ENCODE measurements at regions of chr10 and their contacts with region 1.

Region 1: DNA sequence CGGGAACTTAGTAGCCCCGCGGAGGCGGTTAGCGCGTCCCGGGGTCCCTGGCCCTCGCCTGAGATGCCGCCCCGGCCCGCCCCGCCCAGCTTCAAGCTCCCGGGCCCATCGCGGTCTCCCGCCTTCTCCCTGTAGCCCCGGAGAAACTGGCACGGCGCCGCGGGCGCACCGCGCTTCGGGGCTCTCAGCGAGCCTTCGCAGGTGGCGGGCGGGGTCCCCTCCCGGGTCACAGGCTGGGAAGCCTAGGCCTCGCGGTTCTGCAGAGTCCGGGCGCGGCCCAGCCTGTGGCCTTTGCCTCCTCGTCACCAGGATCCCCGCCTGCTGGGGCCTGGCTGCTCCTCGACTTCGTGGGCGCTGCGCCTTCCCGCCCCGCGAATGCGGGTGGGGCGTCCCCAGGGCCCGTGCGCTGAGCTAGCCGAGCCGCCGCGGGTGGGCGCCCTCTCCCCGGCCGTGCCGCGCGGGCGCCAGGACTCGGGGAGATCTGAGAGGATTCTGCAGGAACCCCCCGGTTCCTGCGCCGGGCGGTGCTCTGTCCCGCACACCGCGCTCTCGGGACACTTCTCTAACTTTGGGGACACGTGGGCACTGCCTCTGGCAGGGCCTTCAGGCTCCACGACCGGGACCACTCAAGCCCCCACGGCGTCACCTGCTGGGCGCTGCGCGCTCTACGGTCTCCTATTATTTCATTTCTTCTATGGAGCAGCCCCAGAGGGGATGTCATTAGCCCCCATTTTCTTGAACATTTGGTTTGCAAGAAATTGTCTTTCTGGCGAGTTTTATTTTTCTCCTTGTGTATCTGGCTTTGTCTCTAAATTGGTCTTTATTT is 682 bp upstream of the RGS10 start:
- DNase-seq: peak; percentile 49
- ATAC-seq: peak; percentile 58
- H3K4me3 ChIP-seq: peak overlapping the region; percentile 81
- H3K27ac ChIP-seq: peak overlapping the region; percentile 43
- H3K4me1 ChIP-seq: peaks cover 20% of the 10 kb centered on the region
- H3K27me3 ChIP-seq: no peaks in the 10 kb centered on the region; the same call in 1 of the 2 replicates
- CTCF ChIP-seq: peak; percentile 56
- POLR2A ChIP-seq: no peak; the same call in 1 of the 2 replicates
- RAD21 ChIP-seq: peak; percentile 54

Region 2: DNA sequence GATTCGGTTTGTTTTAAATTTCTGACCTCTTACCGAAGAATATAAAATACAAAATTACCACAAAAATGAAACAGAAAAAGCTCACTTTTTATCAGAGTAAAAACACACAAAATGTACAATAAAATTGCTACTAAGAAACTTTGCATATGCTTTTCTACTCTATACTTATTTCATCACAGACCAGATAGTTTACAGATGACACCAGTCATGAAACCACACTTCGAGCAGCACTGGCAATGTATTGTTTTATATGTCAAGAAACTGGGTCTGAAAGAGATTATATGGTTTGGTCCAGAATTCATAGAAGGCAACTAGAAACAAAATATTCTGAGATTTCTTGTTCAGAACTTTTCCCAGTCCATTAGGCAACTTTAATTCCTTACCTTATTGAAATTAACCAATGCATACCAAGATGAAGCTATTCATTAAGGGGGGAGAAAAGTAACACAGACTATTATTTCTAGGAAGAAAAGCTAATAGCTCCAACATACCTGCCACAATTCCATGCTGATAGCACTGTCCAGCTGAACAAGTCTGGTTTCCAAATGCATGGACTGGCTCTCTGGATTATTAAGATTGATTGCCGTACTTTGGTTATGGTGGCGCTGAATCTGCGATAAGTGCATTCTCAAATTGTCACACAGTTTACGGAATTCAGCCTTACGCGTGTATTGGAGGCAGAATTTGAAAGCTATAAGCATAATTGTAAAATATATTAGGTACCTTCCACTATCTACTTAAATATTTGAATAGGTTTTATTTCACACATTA is 472.6 kb before region 1 on chr10:
- CTCF ChIA-PET with region 1: no interaction called
- POLR2A ChIA-PET with region 1: interaction called, 12 read pairs
- dilution Hi-C with region 1: no loop called
- in situ Hi-C with region 1: no loop called
- intact Hi-C with region 1: no loop called
- DNase-seq: no peak
- ATAC-seq: no peak
- H3K4me3 ChIP-seq: no peak overlapping the region
- H3K27ac ChIP-seq: no peak overlapping the region
- H3K4me1 ChIP-seq: peaks cover 2% of the 10 kb centered on the region; the same call in 1 of the 2 replicates
- H3K27me3 ChIP-seq: no peaks in the 10 kb centered on the region
- CTCF ChIP-seq: no peak
- POLR2A ChIP-seq: no peak
- RAD21 ChIP-seq: no peak

Region 3: GRCh38 chr10:119355930-119356329 is 187.3 kb before region 1 on chr10:
- CTCF ChIA-PET with region 1: no interaction called
- POLR2A ChIA-PET with region 1: no interaction called
- dilution Hi-C with region 1: no loop called
- in situ Hi-C with region 1: no loop called
- intact Hi-C with region 1: no loop called
- DNase-seq: no peak
- ATAC-seq: no peak
- H3K4me3 ChIP-seq: no peak overlapping the region
- H3K27ac ChIP-seq: no peak overlapping the region
- H3K4me1 ChIP-seq: peaks cover 3% of the 10 kb centered on the region; the same call in 1 of the 2 replicates
- H3K27me3 ChIP-seq: no peaks in the 10 kb centered on the region
- CTCF ChIP-seq: peak; percentile 29; the same call in 1 of the 2 replicates
- POLR2A ChIP-seq: no peak
- RAD21 ChIP-seq: peak; percentile 16; the same call in 1 of the 2 replicates

Region 4: DNA sequence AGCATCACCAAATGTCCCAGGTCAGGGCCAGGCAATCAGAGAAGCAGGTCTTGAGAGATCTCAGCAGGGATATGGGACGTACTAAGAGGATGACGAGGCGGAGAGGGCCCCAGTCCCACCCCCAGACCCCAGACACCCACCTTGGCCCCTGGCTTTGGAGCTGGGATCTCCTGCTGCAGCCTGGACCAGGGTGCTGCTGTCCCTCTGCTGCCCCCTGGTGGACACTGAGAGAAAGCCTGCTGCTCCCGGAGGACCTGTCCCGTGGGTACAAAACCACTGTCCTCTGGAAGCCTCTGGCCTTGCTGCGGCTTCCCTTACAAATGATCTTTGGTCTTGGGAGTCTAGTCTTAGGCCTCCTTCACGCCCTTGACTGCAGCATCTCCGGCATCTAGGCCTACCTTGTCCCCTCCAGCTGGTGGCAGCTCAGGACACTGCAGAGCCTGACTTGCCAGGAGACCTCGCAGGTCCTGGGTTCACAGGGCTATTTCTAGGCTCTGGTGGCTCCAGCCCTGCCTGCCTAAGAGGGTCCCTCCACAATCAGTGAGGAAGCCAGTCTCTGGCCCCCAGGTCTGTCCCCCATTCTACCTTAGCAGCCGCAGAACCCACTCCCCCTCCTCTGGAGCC is 97.8 kb before region 1 on chr10:
- CTCF ChIA-PET with region 1: interaction called, 3 read pairs
- POLR2A ChIA-PET with region 1: no interaction called
- dilution Hi-C with region 1: no loop called
- in situ Hi-C with region 1: no loop called
- intact Hi-C with region 1: loop called (anchors 5 kb)
- DNase-seq: peak; percentile 74
- ATAC-seq: peak; percentile 74
- H3K4me3 ChIP-seq: no peak overlapping the region
- H3K27ac ChIP-seq: no peak overlapping the region
- H3K4me1 ChIP-seq: peaks cover 9% of the 10 kb centered on the region; the same call in 1 of the 2 replicates
- H3K27me3 ChIP-seq: no peaks in the 10 kb centered on the region
- CTCF ChIP-seq: peak; percentile 86
- POLR2A ChIP-seq: no peak
- RAD21 ChIP-seq: peak; percentile 86

Region 5: DNA sequence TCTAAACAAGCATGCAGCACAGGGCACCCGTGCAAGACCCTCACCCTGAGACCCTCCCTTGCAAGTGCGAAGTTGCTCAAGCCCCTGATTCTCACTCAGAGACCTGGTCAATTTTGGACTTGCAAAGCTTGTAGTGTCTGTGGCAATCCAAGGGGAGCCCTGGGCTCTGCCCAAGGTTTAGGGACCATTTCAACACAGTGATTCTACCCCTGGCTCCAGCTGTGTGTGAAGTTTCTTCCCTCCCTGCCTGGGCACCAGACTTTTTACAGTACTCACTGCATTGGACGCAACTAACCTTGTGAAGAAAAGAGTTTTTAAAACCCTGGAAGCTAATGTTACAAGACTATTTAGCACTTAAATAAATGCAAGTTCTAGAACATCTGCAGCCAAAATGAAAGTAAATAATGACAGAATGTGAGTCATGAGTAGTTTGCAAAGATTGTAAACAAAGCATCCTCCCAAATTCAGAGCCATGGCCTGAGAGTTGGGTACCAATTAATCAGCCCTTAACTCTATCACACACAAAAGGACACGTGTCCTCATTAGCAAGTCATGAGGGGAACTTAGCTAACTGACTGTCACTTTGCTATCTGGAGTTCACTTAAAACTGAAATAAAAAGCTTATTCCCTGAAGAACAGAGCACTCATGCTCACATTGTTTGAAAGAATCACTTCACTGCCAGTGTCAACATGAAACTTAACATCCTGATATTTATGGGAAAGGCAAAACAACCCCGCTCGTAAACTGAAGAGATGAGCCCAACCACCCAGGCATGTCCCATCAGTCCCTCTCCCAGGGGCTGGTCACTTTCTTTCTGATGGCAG is 48.8 kb before region 1 on chr10:
- CTCF ChIA-PET with region 1: interaction called, 4 read pairs
- POLR2A ChIA-PET with region 1: no interaction called
- dilution Hi-C with region 1: no loop called
- in situ Hi-C with region 1: no loop called
- intact Hi-C with region 1: loop called (anchors 2 kb)
- DNase-seq: peak; percentile 76
- ATAC-seq: peak; percentile 46
- H3K4me3 ChIP-seq: no peak overlapping the region
- H3K27ac ChIP-seq: peak overlapping the region; percentile 94
- H3K4me1 ChIP-seq: peaks cover 30% of the 10 kb centered on the region
- H3K27me3 ChIP-seq: no peaks in the 10 kb centered on the region
- CTCF ChIP-seq: no peak
- POLR2A ChIP-seq: no peak
- RAD21 ChIP-seq: no peak

Region 6: DNA sequence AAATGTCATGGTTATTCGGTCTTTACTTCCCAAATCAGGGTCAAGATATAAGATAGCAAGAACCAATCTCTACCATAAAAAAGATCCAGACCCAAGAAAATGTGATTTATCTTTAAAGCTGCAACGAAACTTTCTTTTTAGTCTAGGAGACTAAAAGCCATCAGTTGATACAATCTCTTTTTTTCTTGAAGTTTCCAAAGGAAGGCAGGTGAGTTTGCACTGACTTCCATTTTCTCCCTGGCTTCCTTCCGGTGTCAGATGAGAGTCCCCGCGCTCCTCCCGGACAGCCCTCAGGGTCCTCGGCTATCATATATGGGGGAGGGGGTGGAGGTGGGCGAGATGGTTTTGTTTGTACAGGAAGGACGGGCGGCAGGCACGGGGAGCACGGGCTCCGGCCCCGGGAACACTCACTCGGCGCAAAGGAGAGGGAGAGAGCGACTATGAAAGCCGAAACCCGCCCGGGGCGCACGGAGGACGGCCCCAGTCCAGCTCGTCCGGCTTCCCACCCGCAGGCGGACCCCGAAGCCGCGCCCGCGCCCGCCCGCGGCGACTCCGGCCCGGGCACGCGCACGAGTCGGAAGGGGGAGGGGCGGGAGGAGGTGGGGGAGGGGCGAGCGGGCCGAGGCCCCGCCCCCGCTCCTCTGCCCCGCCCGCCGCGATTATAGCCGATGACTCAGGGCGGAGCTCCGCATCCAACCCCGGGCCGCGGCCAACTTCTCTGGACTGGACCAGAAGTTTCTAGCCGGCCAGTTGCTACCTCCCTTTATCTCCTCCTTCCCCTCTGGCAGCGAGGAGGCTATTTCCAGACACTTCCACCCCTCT is 107.7 kb after region 1 on chr10 and contains the start of gene BAG3:
- CTCF ChIA-PET with region 1: interaction called, 3 read pairs
- POLR2A ChIA-PET with region 1: interaction called, 4 read pairs
- dilution Hi-C with region 1: no loop called
- in situ Hi-C with region 1: no loop called
- intact Hi-C with region 1: loop called (anchors 5 kb)
- DNase-seq: peak; percentile 92
- ATAC-seq: peak; percentile 87
- H3K4me3 ChIP-seq: peak within 1 kb of the TSS; percentile 71
- H3K27ac ChIP-seq: peak within 1 kb of the TSS; percentile 89
- H3K4me1 ChIP-seq: peaks cover 11% of the 10 kb centered on the region
- H3K27me3 ChIP-seq: no peaks in the 10 kb centered on the region
- CTCF ChIP-seq: no peak
- POLR2A ChIP-seq: peak; percentile 97
- RAD21 ChIP-seq: no peak
- total RNA-seq, gene BAG3: 5.4 and 5.8 TPM in 2 replicates

Measured in IMR-90 (cell line).